GM23248 (cell line): ENCODE measurements at regions of chr9 and their contacts with region 1.

Region 1: DNA sequence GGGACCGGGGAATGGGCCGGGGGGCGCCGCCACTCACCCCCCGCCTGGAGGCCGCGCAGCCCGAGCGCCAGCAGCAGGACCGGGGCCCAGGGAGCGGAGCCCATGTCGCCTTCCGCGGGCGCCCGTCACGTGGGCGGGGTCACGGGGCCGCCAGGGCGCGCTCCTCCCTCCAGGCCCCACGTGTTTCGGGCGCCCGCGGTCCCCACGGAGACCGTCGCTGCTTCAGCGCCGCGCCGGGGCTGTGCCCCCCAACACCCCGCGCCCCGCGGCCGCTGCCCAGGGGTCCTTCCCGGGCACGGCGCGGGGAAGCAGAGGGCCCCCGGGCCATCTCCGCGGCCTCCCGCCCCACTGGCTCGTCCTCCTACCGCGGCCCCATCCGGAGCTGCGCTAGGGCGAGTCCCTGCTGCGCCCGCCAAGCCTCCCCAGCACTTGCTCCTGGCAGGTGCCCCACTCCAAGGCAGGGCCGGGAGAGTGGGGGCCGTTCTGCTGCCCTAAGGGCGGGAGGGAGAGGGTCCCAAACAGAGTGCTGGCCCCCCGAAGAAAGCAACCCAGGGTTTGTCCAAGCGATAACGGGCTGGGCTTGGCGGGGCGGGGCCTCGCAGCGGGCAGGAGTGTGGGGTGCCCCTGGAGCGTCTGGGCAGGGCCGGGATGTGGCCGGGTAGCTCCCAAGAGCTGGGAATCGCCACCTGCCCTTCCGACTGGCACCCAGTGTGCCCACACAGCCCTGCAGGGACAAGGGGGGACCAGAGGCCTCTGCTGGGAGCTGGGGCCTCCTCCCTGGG is at the start of gene DPP7:
- DNase-seq: peak; percentile 83
- H3K4me3 ChIP-seq: peak within 1 kb of the TSS; percentile 78
- H3K27ac ChIP-seq: no peak within 1 kb of the TSS
- H3K4me1 ChIP-seq: no peaks in the 10 kb centered on the region
- H3K27me3 ChIP-seq: no peaks in the 10 kb centered on the region
- total RNA-seq, gene DPP7: 134 and 142 TPM in 2 replicates

Region 2: DNA sequence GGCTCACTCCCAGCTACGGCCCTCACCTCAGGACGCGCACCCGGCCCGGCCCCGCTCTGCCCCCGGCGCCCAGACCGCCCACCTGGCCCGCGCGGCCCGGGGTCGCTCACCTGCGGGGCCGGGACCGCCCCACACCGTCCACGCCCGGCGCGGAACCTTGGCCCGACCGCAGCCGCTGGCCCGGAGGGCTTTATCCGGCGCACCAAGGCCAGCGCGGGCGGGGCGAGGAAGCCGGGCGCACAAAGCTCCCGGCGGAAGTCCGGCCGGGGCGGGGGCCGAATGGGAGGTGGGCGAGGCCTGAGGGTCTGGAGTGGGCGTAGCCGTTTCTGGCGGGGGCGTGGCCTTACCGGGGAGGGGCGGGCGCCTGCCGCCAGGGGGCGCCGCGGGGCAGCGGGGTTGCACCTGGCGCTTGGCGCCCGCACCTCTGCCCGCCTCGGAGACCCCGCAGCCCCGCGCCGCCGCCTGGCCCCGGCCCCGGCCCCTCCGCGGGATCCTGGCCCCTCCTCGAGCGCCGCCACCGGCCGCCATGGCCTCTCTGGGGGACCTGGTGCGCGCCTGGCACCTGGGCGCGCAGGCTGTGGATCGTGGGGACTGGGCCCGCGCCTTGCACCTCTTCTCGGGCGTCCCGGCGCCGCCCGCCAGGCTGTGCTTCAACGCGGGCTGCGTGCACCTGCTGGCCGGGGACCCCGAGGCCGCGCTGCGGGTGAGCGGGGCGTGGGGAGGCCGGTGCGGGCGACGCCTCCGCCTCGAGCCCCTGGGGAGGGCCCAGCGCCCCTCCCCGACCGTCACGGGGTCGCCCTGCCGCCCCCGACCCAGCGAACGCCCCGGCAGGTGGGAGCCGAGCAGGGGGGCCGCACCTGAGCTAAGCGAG is 308.4 kb after region 1 on chr9 and contains the starts of genes EXD3 and NOXA1:
- in situ Hi-C with region 1: loop called (anchors 25 kb)
- DNase-seq: peak; percentile 96
- H3K4me3 ChIP-seq: peak within 1 kb of the TSS; percentile 80
- H3K27ac ChIP-seq: no peak within 1 kb of the TSS
- H3K4me1 ChIP-seq: peaks cover 8% of the 10 kb centered on the region; the same call in 1 of the 2 replicates
- H3K27me3 ChIP-seq: no peaks in the 10 kb centered on the region
- total RNA-seq, gene EXD3: 11.6 and 17.1 TPM in 2 replicates
- total RNA-seq, gene NOXA1: 0.32 TPM in 1 of 2 replicates, not detected in the other